ENCODE measurements at regions of chr4 and their contacts with region 1.

Region 1: GRCh38 chr4:15956179-15956850 is 6.7 kb downstream of the FGFBP2 start:
- DNase-seq: peak; percentile 55 to 87 (median 79)
- ATAC-seq: peak; percentile 98
- H3K4me3 ChIP-seq: no peak overlapping the region
- H3K4me3 Mint-ChIP-seq: no peak overlapping the region
- H3K27ac ChIP-seq: no peak overlapping the region
- H3K27ac Mint-ChIP-seq: no peak overlapping the region
- H3K4me1 ChIP-seq: no peaks in the 10 kb centered on the region
- H3K4me1 Mint-ChIP-seq: peaks cover 10% of the 10 kb centered on the region
- H3K27me3 ChIP-seq: no peaks in the 10 kb centered on the region
- H3K27me3 Mint-ChIP-seq: no peaks in the 10 kb centered on the region
- CTCF ChIP-seq: peak; percentile 73

Region 2: GRCh38 chr4:15231265-15232091 is 724.8 kb before region 1 on chr4:
- CTCF ChIA-PET with region 1: no interaction called
- POLR2A ChIA-PET with region 1: no interaction called
- intact Hi-C with region 1: loop called in 1 of 2 experiments (anchors 5 kb)
- DNase-seq: peak; percentile 38 to 83 (median 71)
- ATAC-seq: peak; percentile 81
- H3K4me3 ChIP-seq: no peak overlapping the region
- H3K4me3 Mint-ChIP-seq: no peak overlapping the region
- H3K27ac ChIP-seq: no peak overlapping the region
- H3K27ac Mint-ChIP-seq: no peak overlapping the region
- H3K4me1 ChIP-seq: peaks cover 29% of the 10 kb centered on the region
- H3K4me1 Mint-ChIP-seq: peaks cover 31% of the 10 kb centered on the region
- H3K27me3 ChIP-seq: no peaks in the 10 kb centered on the region
- H3K27me3 Mint-ChIP-seq: no peaks in the 10 kb centered on the region
- CTCF ChIP-seq: peak; percentile 71

Region 3: GRCh38 chr4:15729910-15730533 is 226.3 kb before region 1 on chr4:
- CTCF ChIA-PET with region 1: interaction called, 13 read pairs
- POLR2A ChIA-PET with region 1: no interaction called
- intact Hi-C with region 1: loop called (anchors 1 kb)
- DNase-seq: peak in 6 of 9 experiments; percentile 10 to 71 (median 28)
- ATAC-seq: peak; percentile 70
- H3K4me3 ChIP-seq: no peak overlapping the region
- H3K4me3 Mint-ChIP-seq: no peak overlapping the region
- H3K27ac ChIP-seq: no peak overlapping the region
- H3K27ac Mint-ChIP-seq: no peak overlapping the region
- H3K4me1 ChIP-seq: no peaks in the 10 kb centered on the region
- H3K4me1 Mint-ChIP-seq: peaks cover 20% of the 10 kb centered on the region
- H3K27me3 ChIP-seq: no peaks in the 10 kb centered on the region
- H3K27me3 Mint-ChIP-seq: peaks cover 2% of the 10 kb centered on the region
- CTCF ChIP-seq: peak; percentile 100

Region 4: GRCh38 chr4:15971068-15971801 is 14.9 kb after region 1 on chr4:
- CTCF ChIA-PET with region 1: interaction called, 11 read pairs
- POLR2A ChIA-PET with region 1: no interaction called
- intact Hi-C with region 1: no loop called
- DNase-seq: peak in 2 of 9 experiments; percentile 23 to 36
- ATAC-seq: peak; percentile 49
- H3K4me3 ChIP-seq: no peak overlapping the region
- H3K4me3 Mint-ChIP-seq: no peak overlapping the region
- H3K27ac ChIP-seq: no peak overlapping the region
- H3K27ac Mint-ChIP-seq: no peak overlapping the region
- H3K4me1 ChIP-seq: no peaks in the 10 kb centered on the region
- H3K4me1 Mint-ChIP-seq: no peaks in the 10 kb centered on the region
- H3K27me3 ChIP-seq: peaks cover 0 to 2% of the 10 kb centered on the region in 2 experiments
- H3K27me3 Mint-ChIP-seq: no peaks in the 10 kb centered on the region
- CTCF ChIP-seq: no peak

Region 5: GRCh38 chr4:16006791-16007446 is 50.6 kb after region 1 on chr4:
- CTCF ChIA-PET with region 1: interaction called, 87 read pairs
- POLR2A ChIA-PET with region 1: no interaction called
- intact Hi-C with region 1: no loop called
- DNase-seq: no peak
- ATAC-seq: no peak
- H3K4me3 ChIP-seq: no peak overlapping the region
- H3K4me3 Mint-ChIP-seq: no peak overlapping the region
- H3K27ac ChIP-seq: no peak overlapping the region
- H3K27ac Mint-ChIP-seq: no peak overlapping the region
- H3K4me1 ChIP-seq: no peaks in the 10 kb centered on the region
- H3K4me1 Mint-ChIP-seq: no peaks in the 10 kb centered on the region
- H3K27me3 ChIP-seq: no peaks in the 10 kb centered on the region
- H3K27me3 Mint-ChIP-seq: peaks cover 6% of the 10 kb centered on the region
- CTCF ChIP-seq: no peak

Measured in CD8-positive, alpha-beta T cell (primary cell).